Esophagus muscularis mucosa (tissue), 4 donors: ENCODE measurements at regions of chr11 and their contacts with region 1.

Region 1: DNA sequence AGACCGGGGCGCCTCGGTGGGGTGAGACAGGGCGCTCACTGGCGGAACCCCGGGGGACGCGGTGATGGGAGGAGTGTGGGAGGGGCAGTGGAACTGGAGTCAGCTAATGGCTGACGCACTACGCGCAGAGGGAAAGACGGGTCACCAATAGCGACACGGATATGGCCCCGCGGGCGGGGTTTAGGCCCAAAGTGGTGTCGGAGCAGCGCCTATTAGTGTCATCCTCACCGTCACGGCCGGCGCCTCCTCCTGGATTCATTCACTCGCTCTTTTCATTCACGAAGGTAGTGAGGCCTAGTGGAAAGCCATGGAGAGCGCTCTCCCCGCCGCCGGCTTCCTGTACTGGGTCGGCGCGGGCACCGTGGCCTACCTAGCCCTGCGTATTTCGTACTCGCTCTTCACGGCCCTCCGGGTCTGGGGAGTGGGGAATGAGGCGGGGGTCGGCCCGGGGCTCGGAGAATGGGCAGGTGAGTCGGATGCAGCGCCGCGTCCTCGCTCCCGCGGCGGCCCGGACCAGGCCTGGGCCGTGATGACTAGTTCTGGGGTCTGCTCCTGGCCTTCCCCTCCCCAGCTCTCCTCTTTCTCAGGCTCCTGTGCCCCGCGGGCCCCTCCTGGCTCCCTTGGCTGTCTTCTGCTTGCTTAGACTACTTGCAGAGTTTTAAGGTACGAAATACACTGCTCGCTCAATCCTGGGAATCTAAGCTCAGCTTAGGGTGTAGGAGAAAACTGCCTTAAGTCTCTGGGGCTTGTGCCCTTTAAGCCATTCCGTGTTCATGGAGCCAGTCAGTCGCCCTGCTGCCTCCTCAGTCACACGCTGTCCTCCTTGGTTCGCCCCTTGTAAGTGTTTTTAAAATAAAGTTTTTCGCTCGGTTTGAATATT is at the start of gene HSD17B12:
- DNase-seq: peak; percentile 100
- H3K4me3 ChIP-seq: peak within 1 kb of the TSS; percentile 78 to 93 (median 88)
- H3K27ac ChIP-seq: peak within 1 kb of the TSS; percentile 94 to 98 (median 94)
- H3K4me1 ChIP-seq: peaks cover 19 to 24% (median 22%) of the 10 kb centered on the region in 4 donors
- H3K27me3 ChIP-seq: no peaks in the 10 kb centered on the region
- CTCF ChIP-seq: no peak
- EP300 ChIP-seq: no peak
- POLR2A ChIP-seq: peak; percentile 75
- total RNA-seq, gene HSD17B12: 38.8 to 52.7 (median 41.8) TPM

Region 2: GRCh38 chr11:43643898-43644620 is 36.7 kb before region 1 on chr11:
- intact Hi-C with region 1: loop called (anchors 5 kb)
- DNase-seq: peak; percentile 93
- H3K4me3 ChIP-seq: peak overlapping the region; percentile 74 to 91 (median 86)
- H3K27ac ChIP-seq: peak overlapping the region; percentile 69 to 78 (median 76)
- H3K4me1 ChIP-seq: peaks cover 8 to 25% (median 19%) of the 10 kb centered on the region in 4 donors
- H3K27me3 ChIP-seq: peaks cover 0 to 13% (median 0%) of the 10 kb centered on the region in 4 donors
- CTCF ChIP-seq: peak in 1 of 3 experiments; percentile 31
- EP300 ChIP-seq: no peak
- POLR2A ChIP-seq: no peak